ENCODE measurements at regions of chr11 and their contacts with region 1.

Region 1: GRCh38 chr11:75802913-75803820 is 11.8 kb upstream of the UVRAG start:
- DNase-seq: peak; percentile 78 to 82
- ATAC-seq: peak; percentile 90
- H3K4me3 ChIP-seq: no peak overlapping the region
- H3K27ac ChIP-seq: no peak overlapping the region
- H3K4me1 ChIP-seq: no peaks in the 10 kb centered on the region
- H3K27me3 ChIP-seq: no peaks in the 10 kb centered on the region

Region 2: DNA sequence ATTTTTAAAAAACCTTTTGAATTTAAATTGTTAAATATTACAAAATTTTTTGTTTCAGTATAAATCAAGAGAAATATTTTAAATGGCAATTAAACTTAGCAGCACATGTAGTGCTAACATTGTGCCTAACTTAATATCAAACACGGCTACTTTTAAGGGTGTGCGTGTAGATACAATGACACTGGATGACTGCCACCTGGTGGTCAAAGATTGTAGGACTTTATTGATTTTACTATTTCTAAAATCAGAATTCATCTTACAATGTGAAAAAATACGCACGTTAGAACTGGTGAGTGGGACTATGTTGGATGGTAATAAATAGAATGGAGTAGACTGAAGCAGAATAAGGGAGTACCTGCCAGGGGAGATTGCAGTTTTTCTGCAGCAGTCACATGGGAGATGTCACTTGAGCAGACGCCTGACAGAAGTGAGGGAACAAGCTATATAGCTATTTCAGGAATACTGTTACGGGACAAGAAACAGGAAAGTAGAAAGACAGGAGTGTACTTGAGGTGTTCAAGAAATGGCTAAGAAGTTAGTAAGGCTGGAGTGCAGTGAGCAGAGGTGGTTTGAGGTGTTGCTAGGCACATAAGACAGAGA is 64.7 kb after region 1 on chr11:
- intact Hi-C with region 1: loop called (anchors 1 to 2 kb)
- DNase-seq: no peak
- ATAC-seq: peak; percentile 60
- H3K4me3 ChIP-seq: no peak overlapping the region
- H3K27ac ChIP-seq: no peak overlapping the region
- H3K4me1 ChIP-seq: no peaks in the 10 kb centered on the region
- H3K27me3 ChIP-seq: no peaks in the 10 kb centered on the region

Region 3: DNA sequence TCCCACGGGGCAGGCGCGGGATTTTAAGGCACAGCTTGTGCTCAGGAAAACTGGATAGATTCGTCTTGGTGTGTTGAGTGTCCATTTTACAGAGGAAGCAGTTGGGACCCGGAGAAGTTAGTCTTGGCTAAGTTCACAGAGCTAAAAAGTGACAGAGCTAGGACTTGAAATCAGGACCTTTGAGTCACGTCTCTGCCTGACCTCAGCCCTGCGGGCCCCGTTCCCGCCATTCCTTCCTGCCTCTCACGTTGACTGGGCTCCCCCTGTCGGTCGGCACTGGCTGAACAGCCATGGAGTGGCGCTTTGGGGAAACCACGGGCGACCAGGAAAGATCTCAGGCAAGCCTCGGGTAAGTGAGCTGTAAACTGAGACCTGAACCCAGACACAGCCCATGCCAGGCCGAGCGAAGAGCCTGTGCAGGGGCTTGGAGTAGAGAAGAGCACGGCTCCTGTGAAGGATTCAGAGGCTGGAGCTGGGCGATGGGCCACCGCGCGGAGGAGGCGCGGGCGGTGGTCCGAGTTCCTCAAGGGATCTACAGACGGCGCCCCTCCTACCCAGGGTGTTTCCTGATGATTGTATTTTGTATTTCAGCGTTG is 349.0 kb after region 1 on chr11:
- intact Hi-C with region 1: loop called (anchors 5 to 10 kb)
- DNase-seq: peak; percentile 93 to 97
- ATAC-seq: peak; percentile 92
- H3K4me3 ChIP-seq: no peak overlapping the region
- H3K27ac ChIP-seq: no peak overlapping the region
- H3K4me1 ChIP-seq: no peaks in the 10 kb centered on the region
- H3K27me3 ChIP-seq: no peaks in the 10 kb centered on the region

Region 4: DNA sequence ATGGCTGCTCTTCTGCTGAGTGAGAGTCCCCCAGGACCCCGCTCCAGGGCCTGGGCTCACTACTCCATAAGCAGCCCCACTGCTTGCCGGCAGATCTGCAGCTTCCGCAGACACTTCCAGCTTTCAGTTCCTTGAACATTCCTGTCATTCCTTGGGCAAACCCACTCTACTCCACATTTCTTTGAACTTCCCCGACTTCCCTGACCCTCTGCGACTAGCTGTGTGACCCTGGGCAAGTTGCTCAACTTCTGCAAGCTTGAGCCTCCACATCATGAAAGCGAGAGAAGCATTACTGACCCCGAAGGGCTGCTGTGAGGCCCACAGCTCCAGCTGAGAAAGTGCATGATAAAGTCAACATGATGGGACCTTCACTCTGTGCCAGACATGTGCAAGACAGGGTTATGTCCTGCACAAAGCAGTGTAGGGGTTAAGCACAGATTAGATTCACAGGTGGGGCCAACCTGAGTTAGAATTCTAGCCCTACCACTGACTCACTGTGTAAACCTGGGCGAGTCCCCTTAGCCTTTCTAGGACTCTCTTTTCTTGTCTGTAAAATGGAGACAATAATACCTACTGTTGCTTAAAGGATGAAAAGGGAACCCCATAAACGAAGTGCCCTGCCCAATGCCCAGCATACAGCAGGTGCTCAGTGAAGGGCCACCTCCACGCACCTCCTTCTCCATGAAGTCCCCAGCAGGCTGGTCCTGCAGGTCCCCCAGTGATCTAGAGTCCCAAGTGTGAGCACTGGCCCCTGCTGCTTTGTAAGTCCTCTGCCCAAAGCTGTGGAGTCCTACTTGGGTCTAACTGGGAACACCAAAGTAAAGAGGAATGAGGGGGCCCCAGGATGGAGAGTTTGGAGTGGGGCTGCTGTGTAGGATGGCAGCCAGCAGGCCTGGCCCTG is 526.2 kb after region 1 on chr11:
- intact Hi-C with region 1: loop called in 1 of 2 experiments (anchors 10 kb)
- DNase-seq: no peak
- ATAC-seq: no peak
- H3K4me3 ChIP-seq: no peak overlapping the region
- H3K27ac ChIP-seq: no peak overlapping the region
- H3K4me1 ChIP-seq: no peaks in the 10 kb centered on the region
- H3K27me3 ChIP-seq: no peaks in the 10 kb centered on the region